BJ (cell line): ENCODE measurements at regions of chr22 and their contacts with region 1.

Region 1: GRCh38 chr22:37462983-37463382 is 23.2 kb downstream of the MFNG start:
- DNase-seq: no peak
- H3K4me3 ChIP-seq: no peak overlapping the region
- H3K27me3 ChIP-seq: peaks cover 15% of the 10 kb centered on the region
- CTCF ChIP-seq: no peak

Region 2: GRCh38 chr22:37316875-37317371 is 146.1 kb before region 1 on chr22:
- CTCF ChIA-PET with region 1: interaction called, 223 read pairs
- POLR2A ChIA-PET with region 1: no interaction called
- DNase-seq: no peak
- H3K4me3 ChIP-seq: no peak overlapping the region
- H3K27me3 ChIP-seq: no peaks in the 10 kb centered on the region
- CTCF ChIP-seq: peak; percentile 93